ENCODE measurements at regions of chr2 and their contacts with region 1.

Region 1: GRCh38 chr2:240232961-240233893 is 92.8 kb upstream of the OTOS start:
- DNase-seq: peak; percentile 84
- H3K4me3 Mint-ChIP-seq: no peak overlapping the region
- H3K27ac Mint-ChIP-seq: no peak overlapping the region
- H3K4me1 Mint-ChIP-seq: no peaks in the 10 kb centered on the region
- H3K27me3 Mint-ChIP-seq: peaks cover 13% of the 10 kb centered on the region

Region 2: DNA sequence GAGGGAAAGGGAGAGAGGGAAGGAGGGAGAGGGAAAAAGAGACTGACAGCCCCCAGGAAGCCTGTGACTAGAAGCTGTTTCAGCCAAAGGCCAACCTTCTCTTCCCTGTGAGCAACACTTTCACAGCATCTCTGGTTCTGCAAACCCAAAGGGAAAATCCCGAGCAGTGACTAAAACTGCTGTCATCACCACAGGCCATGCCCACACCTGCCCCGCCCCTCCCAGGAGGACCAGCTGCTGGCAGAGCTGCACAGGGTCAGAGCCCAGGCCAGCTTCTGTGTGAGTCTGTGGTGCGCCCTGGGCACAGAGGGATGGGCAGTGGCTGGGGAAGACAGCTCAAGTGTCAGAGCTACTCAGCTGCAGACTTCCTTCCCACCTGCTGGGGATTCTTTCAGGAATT is 27.9 kb before region 1 on chr2:
- CTCF ChIA-PET with region 1: no interaction called
- POLR2A ChIA-PET with region 1: no interaction called
- intact Hi-C with region 1: loop called (anchors 2 kb)
- DNase-seq: peak; percentile 85
- H3K4me3 Mint-ChIP-seq: no peak overlapping the region
- H3K27ac Mint-ChIP-seq: no peak overlapping the region
- H3K4me1 Mint-ChIP-seq: peaks cover 4% of the 10 kb centered on the region
- H3K27me3 Mint-ChIP-seq: peaks cover 30% of the 10 kb centered on the region

Region 3: GRCh38 chr2:240434728-240435456 is 201.7 kb after region 1 on chr2:
- CTCF ChIA-PET with region 1: interaction called, 24 read pairs
- POLR2A ChIA-PET with region 1: no interaction called
- intact Hi-C with region 1: loop called (anchors 1 kb)
- DNase-seq: peak; percentile 88
- H3K4me3 Mint-ChIP-seq: peak overlapping the region; percentile 76
- H3K27ac Mint-ChIP-seq: no peak overlapping the region
- H3K4me1 Mint-ChIP-seq: peaks cover 14% of the 10 kb centered on the region
- H3K27me3 Mint-ChIP-seq: peaks cover 24% of the 10 kb centered on the region

Measured in activated CD4-positive, alpha-beta memory T cell treated with anti-CD3 and anti-CD28 coated beads for 36 hours (primary cell).